ENCODE measurements at regions of chr7 and their contacts with region 1.

Region 1: GRCh38 chr7:136874238-136875032 is 6.0 kb downstream of the CHRM2 start:
- DNase-seq: peak; percentile 73
- ATAC-seq: peak; percentile 21
- H3K4me3 ChIP-seq: no peak overlapping the region
- H3K27ac ChIP-seq: peak overlapping the region; percentile 18; the same call in 1 of the 2 replicates
- H3K4me1 ChIP-seq: peaks cover 22% of the 10 kb centered on the region
- H3K27me3 ChIP-seq: no peaks in the 10 kb centered on the region
- CTCF ChIP-seq: peak; percentile 58
- POLR2A ChIP-seq: no peak
- RAD21 ChIP-seq: peak; percentile 34

Region 2: DNA sequence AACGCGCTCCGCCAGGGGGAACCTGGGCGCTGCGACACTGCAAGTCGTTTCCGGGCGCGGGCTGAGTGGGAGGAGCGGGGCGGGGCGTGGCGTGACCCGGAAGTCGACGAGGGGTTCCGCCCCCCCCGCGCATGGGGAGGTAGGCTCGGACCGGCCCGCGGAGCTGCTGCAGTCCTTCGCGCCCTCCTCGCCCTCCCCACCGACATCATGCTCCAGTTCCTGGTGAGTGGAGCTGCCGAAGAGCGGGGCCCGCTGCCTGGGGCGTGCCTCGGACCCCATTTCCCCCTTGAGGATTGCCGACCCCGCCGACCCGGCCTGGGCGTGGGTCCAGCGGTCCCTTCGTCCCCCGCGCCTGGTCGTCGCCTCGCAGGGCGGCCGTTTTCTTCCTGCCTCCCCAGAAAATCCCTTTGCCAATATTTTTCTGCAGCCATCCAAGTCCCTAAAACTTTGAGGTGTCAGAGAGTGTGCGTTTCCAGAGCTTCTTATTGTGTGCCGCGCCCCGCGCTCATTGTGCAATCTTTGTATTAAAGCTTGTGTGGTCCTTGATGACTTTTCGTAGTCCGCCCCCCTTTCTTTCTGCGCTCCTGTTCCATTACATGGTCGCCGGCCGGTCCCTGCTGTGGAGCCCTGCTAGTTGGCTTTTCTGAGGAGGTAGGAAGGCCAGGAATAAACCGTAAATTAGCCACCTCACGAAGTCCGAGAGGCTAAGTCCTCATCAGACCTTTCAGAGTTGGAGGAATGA is 1211.9 kb before region 1 on chr7 and contains the start of gene STMP1:
- CTCF ChIA-PET with region 1: no interaction called
- POLR2A ChIA-PET with region 1: no interaction called
- dilution Hi-C with region 1: no loop called
- in situ Hi-C with region 1: no loop called
- intact Hi-C with region 1: loop called (anchors 10 kb)
- DNase-seq: peak; percentile 96
- ATAC-seq: peak; percentile 93
- H3K4me3 ChIP-seq: peak within 1 kb of the TSS; percentile 84
- H3K27ac ChIP-seq: peak within 1 kb of the TSS; percentile 100
- H3K4me1 ChIP-seq: peaks cover 9% of the 10 kb centered on the region
- H3K27me3 ChIP-seq: no peaks in the 10 kb centered on the region
- CTCF ChIP-seq: peak; percentile 80
- POLR2A ChIP-seq: peak; percentile 94
- RAD21 ChIP-seq: peak; percentile 68
- total RNA-seq, gene STMP1: 6.1 and 11.9 TPM in 2 replicates

Region 3: DNA sequence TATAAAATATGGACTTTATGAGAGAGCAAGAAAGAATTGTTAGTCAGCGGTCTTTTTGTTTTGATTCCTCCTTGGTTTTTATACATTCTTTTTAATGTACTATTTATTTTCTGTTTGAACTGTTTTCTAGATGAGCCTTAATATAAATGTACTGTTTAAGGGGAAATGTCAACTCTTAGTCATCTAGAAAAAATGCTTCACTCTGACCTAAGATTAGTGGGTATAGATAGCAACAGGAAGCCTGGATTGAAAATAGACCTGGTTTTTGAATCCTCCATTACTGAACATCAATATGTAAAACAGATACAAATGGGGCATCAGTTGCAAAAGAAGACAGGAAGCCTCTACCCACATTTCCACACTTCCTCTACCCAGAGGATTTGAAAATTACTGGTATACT is 81.8 kb after region 1 on chr7:
- CTCF ChIA-PET with region 1: no interaction called
- POLR2A ChIA-PET with region 1: no interaction called
- dilution Hi-C with region 1: no loop called
- in situ Hi-C with region 1: no loop called
- intact Hi-C with region 1: loop called (anchors 5 kb)
- DNase-seq: peak; percentile 87
- ATAC-seq: peak; percentile 70
- H3K4me3 ChIP-seq: no peak overlapping the region
- H3K27ac ChIP-seq: peak overlapping the region; percentile 100
- H3K4me1 ChIP-seq: peaks cover 20% of the 10 kb centered on the region
- H3K27me3 ChIP-seq: no peaks in the 10 kb centered on the region
- CTCF ChIP-seq: no peak
- POLR2A ChIP-seq: no peak
- RAD21 ChIP-seq: no peak

Region 4: GRCh38 chr7:137074386-137075030 is 200.1 kb after region 1 on chr7:
- CTCF ChIA-PET with region 1: interaction called, 3 read pairs
- POLR2A ChIA-PET with region 1: no interaction called
- dilution Hi-C with region 1: no loop called
- in situ Hi-C with region 1: no loop called
- intact Hi-C with region 1: loop called (anchors 5 kb)
- DNase-seq: peak; percentile 87
- ATAC-seq: peak; percentile 77
- H3K4me3 ChIP-seq: peak overlapping the region; percentile 46; the same call in 1 of the 2 replicates
- H3K27ac ChIP-seq: peak overlapping the region; percentile 100
- H3K4me1 ChIP-seq: peaks cover 18% of the 10 kb centered on the region
- H3K27me3 ChIP-seq: no peaks in the 10 kb centered on the region
- CTCF ChIP-seq: no peak
- POLR2A ChIP-seq: no peak
- RAD21 ChIP-seq: no peak

Region 5: GRCh38 chr7:137146012-137146455 is 271.6 kb after region 1 on chr7:
- CTCF ChIA-PET with region 1: no interaction called
- POLR2A ChIA-PET with region 1: no interaction called
- dilution Hi-C with region 1: no loop called
- in situ Hi-C with region 1: loop called (anchors 10 kb)
- intact Hi-C with region 1: loop called (anchors 5 kb)
- DNase-seq: peak; percentile 95
- ATAC-seq: peak; percentile 86
- H3K4me3 ChIP-seq: no peak overlapping the region
- H3K27ac ChIP-seq: no peak overlapping the region
- H3K4me1 ChIP-seq: peaks cover 23% of the 10 kb centered on the region
- H3K27me3 ChIP-seq: no peaks in the 10 kb centered on the region
- CTCF ChIP-seq: no peak
- POLR2A ChIP-seq: no peak
- RAD21 ChIP-seq: peak; percentile 26; the same call in 1 of the 2 replicates

Region 6: DNA sequence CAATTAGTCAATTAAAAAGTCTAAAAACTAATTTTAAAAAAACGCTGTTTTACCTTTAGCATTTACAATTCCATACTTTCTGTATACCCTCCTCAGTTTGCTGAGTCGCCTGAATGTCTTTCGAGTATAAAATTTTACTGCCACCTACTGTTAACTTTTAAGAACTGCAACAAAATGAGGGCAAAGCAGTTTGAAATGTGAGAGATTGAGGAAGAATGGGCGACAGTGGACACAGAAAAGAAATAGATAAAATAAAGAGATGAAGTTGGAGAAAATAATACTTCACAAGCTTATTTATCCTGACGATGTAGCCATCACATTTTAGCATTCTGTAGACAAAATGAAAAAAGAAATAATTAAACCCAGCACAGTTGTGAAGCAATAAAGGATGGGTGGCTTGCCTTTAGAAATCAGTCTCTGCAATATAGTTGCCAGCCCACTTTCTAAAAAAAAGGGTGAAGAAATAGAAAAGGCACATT is 579.9 kb after region 1 on chr7:
- CTCF ChIA-PET with region 1: no interaction called
- POLR2A ChIA-PET with region 1: no interaction called
- dilution Hi-C with region 1: no loop called
- in situ Hi-C with region 1: no loop called
- intact Hi-C with region 1: loop called (anchors 5 kb)
- DNase-seq: peak; percentile 70
- ATAC-seq: peak; percentile 82
- H3K4me3 ChIP-seq: no peak overlapping the region
- H3K27ac ChIP-seq: peak overlapping the region; percentile 86
- H3K4me1 ChIP-seq: peaks cover 7% of the 10 kb centered on the region
- H3K27me3 ChIP-seq: no peaks in the 10 kb centered on the region
- CTCF ChIP-seq: peak; percentile 72
- POLR2A ChIP-seq: no peak
- RAD21 ChIP-seq: peak; percentile 72

Measured in IMR-90 (cell line).